PC-3 (cell line): ENCODE measurements at regions of chr17 and their contacts with region 1.

Region 1: GRCh38 chr17:71423871-71424546 is 696.8 kb upstream of the SOX9 start:
- DNase-seq: peak; percentile 99
- ATAC-seq: peak; percentile 97
- H3K4me3 ChIP-seq: no peak overlapping the region
- H3K27ac ChIP-seq: peak overlapping the region; percentile 97
- H3K4me1 ChIP-seq: peaks cover 46% of the 10 kb centered on the region
- H3K27me3 ChIP-seq: no peaks in the 10 kb centered on the region
- CTCF ChIP-seq: peak; percentile 38; the same call in 1 of the 2 replicates

Region 2: GRCh38 chr17:71237903-71238538 is 186.0 kb before region 1 on chr17:
- CTCF ChIA-PET with region 1: no interaction called
- POLR2A ChIA-PET with region 1: no interaction called
- intact Hi-C with region 1: loop called (anchors 5 kb)
- DNase-seq: peak; percentile 87
- ATAC-seq: peak; percentile 97
- H3K4me3 ChIP-seq: no peak overlapping the region
- H3K27ac ChIP-seq: peak overlapping the region; percentile 32
- H3K4me1 ChIP-seq: peaks cover 4% of the 10 kb centered on the region; the same call in 1 of the 2 replicates
- H3K27me3 ChIP-seq: no peaks in the 10 kb centered on the region
- CTCF ChIP-seq: peak; percentile 85

Region 3: DNA sequence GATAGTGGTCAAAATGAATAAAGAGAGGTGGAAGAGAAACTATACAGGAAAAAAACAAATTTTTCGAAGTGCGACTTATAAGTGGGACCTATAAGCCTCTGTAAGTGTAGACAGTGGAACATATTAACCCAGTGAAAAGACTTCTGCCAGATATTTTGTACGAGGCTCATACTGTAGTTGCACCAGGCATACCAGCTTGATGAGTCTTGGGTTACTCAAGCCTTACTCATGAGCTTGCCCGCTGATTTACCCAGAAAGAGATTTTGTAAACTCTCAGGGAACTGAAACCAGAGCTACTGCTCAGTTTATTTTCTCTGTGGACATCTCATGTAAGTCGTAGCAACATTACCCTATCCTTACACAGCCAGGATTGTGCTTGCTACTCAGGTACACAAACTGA is 11.2 kb before region 1 on chr17:
- CTCF ChIA-PET with region 1: no interaction called
- POLR2A ChIA-PET with region 1: interaction called, 3 read pairs
- intact Hi-C with region 1: loop called (anchors 1 kb)
- DNase-seq: peak; percentile 99
- ATAC-seq: peak; percentile 98
- H3K4me3 ChIP-seq: peak overlapping the region; percentile 17
- H3K27ac ChIP-seq: peak overlapping the region; percentile 93
- H3K4me1 ChIP-seq: peaks cover 43% of the 10 kb centered on the region
- H3K27me3 ChIP-seq: no peaks in the 10 kb centered on the region
- CTCF ChIP-seq: no peak

Region 4: GRCh38 chr17:71455219-71455618 is 31.2 kb after region 1 on chr17:
- CTCF ChIA-PET with region 1: no interaction called
- POLR2A ChIA-PET with region 1: no interaction called
- intact Hi-C with region 1: loop called (anchors 1 kb)
- DNase-seq: peak; percentile 79
- ATAC-seq: peak; percentile 90
- H3K4me3 ChIP-seq: no peak overlapping the region
- H3K27ac ChIP-seq: peak overlapping the region; percentile 56
- H3K4me1 ChIP-seq: peaks cover 20% of the 10 kb centered on the region
- H3K27me3 ChIP-seq: no peaks in the 10 kb centered on the region
- CTCF ChIP-seq: no peak

Region 5: GRCh38 chr17:71633391-71633849 is 209.4 kb after region 1 on chr17:
- CTCF ChIA-PET with region 1: no interaction called
- POLR2A ChIA-PET with region 1: no interaction called
- intact Hi-C with region 1: loop called (anchors 5 kb)
- DNase-seq: peak; percentile 98
- ATAC-seq: peak; percentile 74
- H3K4me3 ChIP-seq: peak overlapping the region; percentile 32
- H3K27ac ChIP-seq: peak overlapping the region; percentile 62
- H3K4me1 ChIP-seq: peaks cover 41% of the 10 kb centered on the region
- H3K27me3 ChIP-seq: no peaks in the 10 kb centered on the region
- CTCF ChIP-seq: no peak